BJ (cell line): ENCODE measurements at regions of chr12 and their contacts with region 1.

Region 1: DNA sequence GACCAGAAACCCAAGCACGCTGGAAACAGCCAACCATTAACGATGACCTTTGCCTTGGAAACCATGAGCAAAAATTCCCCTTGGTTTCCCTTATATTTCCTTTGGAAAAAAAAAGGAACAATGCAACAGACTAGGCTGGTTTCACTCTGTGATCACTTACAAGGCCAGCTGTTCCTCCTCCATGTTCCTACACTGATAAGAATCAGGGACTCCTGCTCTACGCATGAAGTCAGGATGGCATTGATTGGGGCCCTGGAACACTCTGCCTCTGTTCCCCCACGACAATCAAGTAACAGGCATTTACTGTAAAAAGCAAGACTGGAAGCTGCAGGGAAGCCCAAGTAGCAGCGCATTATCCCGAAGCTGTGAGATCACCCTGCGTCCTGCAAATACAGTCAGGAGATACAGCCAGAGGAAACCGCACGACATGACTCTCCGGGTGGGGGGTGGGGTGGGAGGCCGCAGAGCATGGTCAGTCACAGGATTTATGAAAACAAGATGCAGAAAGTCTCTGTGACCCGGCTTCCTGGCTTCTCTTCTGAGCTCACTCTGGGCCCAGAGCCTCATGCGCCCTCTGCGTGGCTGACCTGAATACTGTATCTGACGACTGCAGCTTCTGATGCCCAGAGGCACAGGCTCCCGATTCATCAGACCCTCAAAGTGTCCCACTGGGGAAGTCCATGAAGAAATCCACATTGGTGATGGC is 31.1 kb downstream of the SSH1 start:
- DNase-seq: peak; percentile 95
- H3K4me3 ChIP-seq: peak overlapping the region; percentile 10
- H3K27me3 ChIP-seq: no peaks in the 10 kb centered on the region
- CTCF ChIP-seq: peak; percentile 26; the same call in 1 of the 2 replicates

Region 2: GRCh38 chr12:108784270-108784669 is 42.0 kb before region 1 on chr12:
- CTCF ChIA-PET with region 1: no interaction called
- POLR2A ChIA-PET with region 1: no interaction called
- DNase-seq: no peak
- H3K4me3 ChIP-seq: no peak overlapping the region
- H3K27me3 ChIP-seq: no peaks in the 10 kb centered on the region
- CTCF ChIP-seq: no peak

Region 3: DNA sequence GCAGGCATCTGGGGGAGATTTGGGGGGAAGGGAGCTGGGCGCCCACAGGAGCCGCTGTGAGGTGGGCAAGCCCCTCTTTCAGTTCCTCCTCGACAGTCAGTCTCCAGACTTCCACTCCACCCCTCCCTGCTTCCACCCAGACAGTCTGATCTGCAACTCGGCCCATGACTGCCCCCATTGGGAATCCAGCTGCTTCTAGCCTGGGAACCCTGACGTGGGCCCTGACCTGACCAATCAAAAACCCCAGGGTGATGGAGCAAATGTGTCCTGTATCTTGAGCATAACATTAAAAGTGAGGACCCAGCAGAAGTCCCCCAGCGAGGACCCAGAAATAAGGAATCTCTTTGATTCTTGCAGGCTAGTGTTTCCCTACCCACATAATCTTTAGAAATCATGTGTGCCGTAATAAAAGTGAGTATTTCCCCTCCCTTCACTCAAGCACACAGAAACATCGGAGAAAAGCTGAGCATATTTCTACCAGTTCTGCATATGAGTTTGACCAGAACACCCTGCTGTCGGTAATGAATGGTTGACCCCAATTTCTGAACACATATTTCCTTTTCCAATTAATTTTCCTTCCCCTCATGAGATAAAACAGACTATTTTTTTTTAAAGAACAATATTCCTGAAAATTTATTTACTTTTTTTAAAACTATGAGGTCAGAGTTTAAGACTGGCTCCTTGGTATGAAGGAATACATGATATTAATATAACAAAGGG is 24.8 kb after region 1 on chr12:
- CTCF ChIA-PET with region 1: interaction called, 4 read pairs
- POLR2A ChIA-PET with region 1: interaction called, 22 read pairs
- DNase-seq: no peak
- H3K4me3 ChIP-seq: no peak overlapping the region
- H3K27me3 ChIP-seq: no peaks in the 10 kb centered on the region
- CTCF ChIP-seq: no peak

Region 4: DNA sequence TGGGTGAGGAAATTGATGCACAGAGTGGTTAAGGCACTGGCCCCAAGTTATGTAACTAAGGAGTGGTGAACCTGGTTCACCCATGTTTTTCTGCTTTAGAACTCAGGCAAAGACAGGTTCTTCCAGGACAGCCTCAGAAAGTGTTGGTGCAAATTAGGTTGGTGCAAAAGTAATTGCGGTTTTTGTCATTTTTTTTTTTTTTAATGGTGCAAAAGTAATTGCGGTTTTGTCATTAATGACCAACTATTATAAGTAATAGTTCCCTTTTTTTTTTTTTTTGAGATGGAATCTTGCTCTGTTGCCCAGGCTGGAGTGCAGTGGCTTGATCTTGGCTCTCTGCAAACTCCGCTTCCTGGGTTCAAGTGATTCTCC is 36.3 kb after region 1 on chr12:
- CTCF ChIA-PET with region 1: no interaction called
- POLR2A ChIA-PET with region 1: no interaction called
- DNase-seq: no peak
- H3K4me3 ChIP-seq: no peak overlapping the region
- H3K27me3 ChIP-seq: no peaks in the 10 kb centered on the region
- CTCF ChIP-seq: no peak